T-cell (primary cell): ENCODE measurements at regions of chr1 and their contacts with region 1.

Region 1: DNA sequence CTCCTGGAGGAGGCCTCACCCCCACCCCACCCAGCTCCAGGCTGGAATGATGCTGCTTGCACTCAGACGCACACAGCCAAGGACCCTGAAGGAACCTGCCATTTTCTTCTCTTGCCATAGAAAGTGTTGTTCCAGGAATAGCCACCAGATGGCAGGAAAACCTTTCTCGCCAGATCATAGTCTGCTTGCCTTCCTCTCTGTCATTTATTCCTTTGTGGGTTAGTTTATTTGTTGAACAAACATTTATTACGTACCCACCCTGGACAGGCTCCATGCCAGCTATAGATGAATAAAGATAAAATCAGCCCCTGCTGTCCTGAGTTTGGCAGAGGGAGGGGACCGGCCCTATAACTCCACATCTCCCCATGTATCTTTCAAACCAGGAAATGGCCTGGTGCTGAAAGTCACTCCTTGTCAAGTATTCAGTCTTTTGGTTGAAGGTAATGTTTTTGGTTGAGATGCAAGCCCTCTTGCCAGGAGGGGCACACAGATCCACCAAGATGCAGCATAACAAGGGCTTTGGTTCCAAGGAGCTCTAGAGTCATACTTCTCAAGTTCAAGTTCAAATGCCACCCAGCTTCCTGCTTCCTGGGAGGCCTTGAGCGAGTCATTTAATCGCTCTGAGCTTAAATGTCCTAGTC is 7.0 kb upstream of the KCNC4 start:
- DNase-seq: peak; percentile 21 to 89 (median 59)
- ATAC-seq: peak; percentile 58 to 68 (median 66)
- H3K4me3 ChIP-seq: no peak overlapping the region
- H3K4me3 Mint-ChIP-seq: no peak overlapping the region
- H3K27ac ChIP-seq: peak overlapping the region; percentile 39
- H3K27ac Mint-ChIP-seq: peak overlapping the region; percentile 82 to 89
- H3K4me1 ChIP-seq: peaks cover 5 to 26% of the 10 kb centered on the region in 2 experiments
- H3K4me1 Mint-ChIP-seq: peaks cover 20 to 23% (median 23%) of the 10 kb centered on the region in 3 donors
- H3K27me3 ChIP-seq: no peaks in the 10 kb centered on the region
- H3K27me3 Mint-ChIP-seq: no peaks in the 10 kb centered on the region

Region 2: GRCh38 chr1:110312188-110313121 is 109.3 kb after region 1 on chr1:
- CTCF ChIA-PET with region 1: interaction called, 63 to 181 read pairs
- POLR2A ChIA-PET with region 1: no interaction called
- DNase-seq: peak; percentile 42 to 84 (median 66)
- ATAC-seq: peak; percentile 94 to 100 (median 97)
- H3K4me3 ChIP-seq: no peak overlapping the region
- H3K4me3 Mint-ChIP-seq: no peak overlapping the region
- H3K27ac ChIP-seq: no peak overlapping the region
- H3K27ac Mint-ChIP-seq: no peak overlapping the region
- H3K4me1 ChIP-seq: peaks cover 0 to 7% of the 10 kb centered on the region in 2 experiments
- H3K4me1 Mint-ChIP-seq: peaks cover 2 to 9% (median 3%) of the 10 kb centered on the region in 3 donors
- H3K27me3 ChIP-seq: no peaks in the 10 kb centered on the region
- H3K27me3 Mint-ChIP-seq: no peaks in the 10 kb centered on the region

Region 3: DNA sequence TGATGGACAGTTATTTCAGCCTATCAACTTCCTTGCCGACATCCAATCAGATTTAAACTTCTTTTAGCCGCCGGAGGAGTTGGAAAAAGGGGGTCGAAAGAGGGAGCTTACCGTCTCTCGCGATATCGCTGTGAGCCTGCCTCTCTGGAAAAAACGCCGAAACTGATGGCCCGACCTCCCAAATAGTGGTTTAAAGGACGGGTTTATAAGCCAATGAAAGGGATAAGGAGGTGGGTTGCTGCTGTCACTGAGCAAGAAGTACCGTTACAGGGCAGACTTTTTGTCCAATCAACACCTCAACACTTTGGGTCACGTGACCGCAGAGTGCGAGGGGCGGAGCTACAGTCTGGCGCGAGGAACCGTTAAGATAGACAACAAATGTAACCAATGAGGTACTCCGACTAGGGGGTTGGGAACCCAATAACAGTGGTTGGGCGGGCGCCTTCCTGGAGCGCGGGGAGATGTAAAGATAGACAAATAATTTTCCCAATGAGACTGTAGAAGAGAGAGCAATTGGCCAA is 135.8 kb after region 1 on chr1 and contains the start of gene RBM15:
- CTCF ChIA-PET with region 1: interaction called, 4 to 47 read pairs
- POLR2A ChIA-PET with region 1: no interaction called
- DNase-seq: peak; percentile 87 to 100 (median 96)
- ATAC-seq: peak; percentile 72 to 77 (median 74)
- H3K4me3 ChIP-seq: peak within 1 kb of the TSS; percentile 98
- H3K4me3 Mint-ChIP-seq: no peak within 1 kb of the TSS
- H3K27ac ChIP-seq: peak within 1 kb of the TSS; percentile 98
- H3K27ac Mint-ChIP-seq: no peak within 1 kb of the TSS
- H3K4me1 ChIP-seq: peaks cover 30 to 37% of the 10 kb centered on the region in 2 experiments
- H3K4me1 Mint-ChIP-seq: peaks cover 55 to 63% (median 57%) of the 10 kb centered on the region in 3 donors
- H3K27me3 ChIP-seq: no peaks in the 10 kb centered on the region
- H3K27me3 Mint-ChIP-seq: no peaks in the 10 kb centered on the region
- total RNA-seq, gene RBM15: 41.1 to 46.0 (median 43.7) TPM

Region 4: GRCh38 chr1:110460253-110461220 is 257.4 kb after region 1 on chr1:
- CTCF ChIA-PET with region 1: interaction called, 21 to 65 read pairs
- POLR2A ChIA-PET with region 1: interaction called in 1 of 2 experiments, 3 read pairs
- DNase-seq: peak; percentile 55 to 89 (median 79)
- ATAC-seq: peak; percentile 90 to 92 (median 91)
- H3K4me3 ChIP-seq: no peak overlapping the region
- H3K4me3 Mint-ChIP-seq: no peak overlapping the region
- H3K27ac ChIP-seq: no peak overlapping the region
- H3K27ac Mint-ChIP-seq: no peak overlapping the region
- H3K4me1 ChIP-seq: no peaks in the 10 kb centered on the region
- H3K4me1 Mint-ChIP-seq: no peaks in the 10 kb centered on the region
- H3K27me3 ChIP-seq: peaks cover 0 to 10% of the 10 kb centered on the region in 2 experiments
- H3K27me3 Mint-ChIP-seq: peaks cover 3 to 4% of the 10 kb centered on the region in 2 donors

Region 5: GRCh38 chr1:110495926-110496600 is 292.9 kb after region 1 on chr1:
- CTCF ChIA-PET with region 1: interaction called, 6 to 22 read pairs
- POLR2A ChIA-PET with region 1: no interaction called
- DNase-seq: peak; percentile 36 to 86 (median 65)
- ATAC-seq: peak; percentile 70 to 85 (median 80)
- H3K4me3 ChIP-seq: no peak overlapping the region
- H3K4me3 Mint-ChIP-seq: no peak overlapping the region
- H3K27ac ChIP-seq: no peak overlapping the region
- H3K27ac Mint-ChIP-seq: no peak overlapping the region
- H3K4me1 ChIP-seq: no peaks in the 10 kb centered on the region
- H3K4me1 Mint-ChIP-seq: no peaks in the 10 kb centered on the region
- H3K27me3 ChIP-seq: peaks cover 0 to 10% of the 10 kb centered on the region in 2 experiments
- H3K27me3 Mint-ChIP-seq: peaks cover 0 to 4% of the 10 kb centered on the region in 2 donors